Activated CD4-positive, alpha-beta T cell treated with anti-CD3 and anti-CD28 coated beads for 36 hours (primary cell): ENCODE measurements at regions of chr11 and their contacts with region 1.

Region 1: GRCh38 chr11:57530596-57531507 is at the start of gene TIMM10:
- DNase-seq: peak; percentile 97
- ATAC-seq: peak; percentile 95
- H3K4me3 Mint-ChIP-seq: peak within 1 kb of the TSS; percentile 81
- H3K27ac Mint-ChIP-seq: peak within 1 kb of the TSS; percentile 87
- H3K4me1 Mint-ChIP-seq: peaks cover 37% of the 10 kb centered on the region
- H3K27me3 Mint-ChIP-seq: no peaks in the 10 kb centered on the region
- total RNA-seq, gene TIMM10: 124 to 158 TPM

Region 2: GRCh38 chr11:57335343-57336110 is 195.3 kb before region 1 on chr11 and contains the start of gene SSRP1:
- CTCF ChIA-PET with region 1: interaction called, 6 read pairs
- POLR2A ChIA-PET with region 1: no interaction called
- intact Hi-C with region 1: loop called in 1 of 2 experiments (anchors 1 kb)
- DNase-seq: peak; percentile 93
- ATAC-seq: peak; percentile 99
- H3K4me3 Mint-ChIP-seq: peak within 1 kb of the TSS; percentile 97
- H3K27ac Mint-ChIP-seq: peak within 1 kb of the TSS; percentile 100
- H3K4me1 Mint-ChIP-seq: peaks cover 43% of the 10 kb centered on the region
- H3K27me3 Mint-ChIP-seq: no peaks in the 10 kb centered on the region
- total RNA-seq, gene SSRP1: 279 to 296 TPM

Region 3: GRCh38 chr11:57456960-57457642 is 73.8 kb before region 1 on chr11:
- CTCF ChIA-PET with region 1: interaction called, 74 read pairs
- POLR2A ChIA-PET with region 1: no interaction called
- intact Hi-C with region 1: loop called (anchors 1 kb)
- DNase-seq: peak; percentile 87
- ATAC-seq: peak; percentile 36
- H3K4me3 Mint-ChIP-seq: peak overlapping the region; percentile 15
- H3K27ac Mint-ChIP-seq: no peak overlapping the region
- H3K4me1 Mint-ChIP-seq: peaks cover 27% of the 10 kb centered on the region
- H3K27me3 Mint-ChIP-seq: peaks cover 25% of the 10 kb centered on the region

Region 4: DNA sequence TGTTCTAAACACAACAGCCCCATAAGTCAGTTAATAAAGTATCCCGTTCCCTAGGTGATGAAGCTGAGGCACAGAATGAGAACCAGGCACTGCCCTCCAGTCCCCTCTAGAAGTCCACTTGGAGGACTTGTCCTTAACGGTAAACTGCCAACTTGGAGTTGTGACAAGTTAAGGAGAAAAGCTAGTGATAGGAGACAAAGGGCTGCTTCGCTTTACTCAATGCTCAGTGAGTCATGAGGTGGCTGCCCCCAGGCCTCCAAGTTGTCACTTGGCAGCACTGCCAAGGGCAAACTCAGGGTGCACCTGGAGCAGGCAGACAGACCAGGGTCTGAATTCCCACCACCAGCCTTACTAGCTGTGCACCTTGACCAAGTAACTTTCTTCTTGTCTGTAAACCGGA is 28.9 kb before region 1 on chr11:
- CTCF ChIA-PET with region 1: interaction called, 262 read pairs
- POLR2A ChIA-PET with region 1: no interaction called
- intact Hi-C with region 1: no loop called
- DNase-seq: no peak
- ATAC-seq: no peak
- H3K4me3 Mint-ChIP-seq: no peak overlapping the region
- H3K27ac Mint-ChIP-seq: no peak overlapping the region
- H3K4me1 Mint-ChIP-seq: no peaks in the 10 kb centered on the region
- H3K27me3 Mint-ChIP-seq: no peaks in the 10 kb centered on the region

Region 5: DNA sequence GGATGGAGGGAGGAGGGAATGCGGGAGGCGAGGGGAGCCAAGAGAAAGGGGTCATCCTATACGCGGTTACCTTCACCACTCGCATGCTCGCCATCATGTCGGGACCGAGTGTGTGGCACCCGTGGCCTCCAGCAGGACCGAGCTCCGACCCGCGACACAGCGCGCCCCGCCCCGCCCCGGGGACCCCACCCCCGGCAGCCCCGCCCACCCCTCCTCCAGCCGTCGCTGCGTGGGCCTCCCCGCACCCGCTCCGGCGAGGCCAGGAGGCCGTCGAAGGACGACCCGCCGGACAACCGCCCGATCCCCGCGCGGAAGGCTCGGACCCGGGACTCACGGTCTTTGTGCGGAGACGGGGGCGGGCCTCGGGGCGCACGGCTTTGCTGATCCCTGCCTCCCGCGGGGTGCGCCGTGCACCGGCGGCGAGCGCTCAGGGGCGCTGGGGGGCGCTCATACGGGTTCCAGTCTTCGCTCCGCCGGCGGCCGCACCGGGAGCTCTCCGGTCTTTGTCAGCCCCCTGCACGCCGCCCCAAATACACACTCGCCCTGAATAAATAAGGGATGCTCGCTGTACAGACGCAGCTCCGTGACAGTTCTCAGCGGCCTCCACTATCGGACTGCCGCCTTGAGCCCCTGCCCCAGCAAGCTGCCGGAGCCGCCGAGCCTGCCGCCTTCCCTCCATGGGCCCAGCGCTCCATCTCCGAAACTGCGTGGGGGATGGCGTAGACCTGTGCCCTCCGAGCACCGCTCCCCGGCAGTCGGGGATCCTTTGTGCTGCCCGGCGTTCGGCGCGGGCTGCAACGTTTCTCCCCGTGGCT is 36.9 kb after region 1 on chr11 and contains the start of gene UBE2L6:
- CTCF ChIA-PET with region 1: interaction called, 6 read pairs
- POLR2A ChIA-PET with region 1: no interaction called
- intact Hi-C with region 1: loop called (anchors 1 kb)
- DNase-seq: peak; percentile 95
- ATAC-seq: peak; percentile 80
- H3K4me3 Mint-ChIP-seq: peak within 1 kb of the TSS; percentile 89
- H3K27ac Mint-ChIP-seq: peak within 1 kb of the TSS; percentile 98
- H3K4me1 Mint-ChIP-seq: peaks cover 29% of the 10 kb centered on the region
- H3K27me3 Mint-ChIP-seq: no peaks in the 10 kb centered on the region
- total RNA-seq, gene UBE2L6: 179 to 252 TPM

Region 6: DNA sequence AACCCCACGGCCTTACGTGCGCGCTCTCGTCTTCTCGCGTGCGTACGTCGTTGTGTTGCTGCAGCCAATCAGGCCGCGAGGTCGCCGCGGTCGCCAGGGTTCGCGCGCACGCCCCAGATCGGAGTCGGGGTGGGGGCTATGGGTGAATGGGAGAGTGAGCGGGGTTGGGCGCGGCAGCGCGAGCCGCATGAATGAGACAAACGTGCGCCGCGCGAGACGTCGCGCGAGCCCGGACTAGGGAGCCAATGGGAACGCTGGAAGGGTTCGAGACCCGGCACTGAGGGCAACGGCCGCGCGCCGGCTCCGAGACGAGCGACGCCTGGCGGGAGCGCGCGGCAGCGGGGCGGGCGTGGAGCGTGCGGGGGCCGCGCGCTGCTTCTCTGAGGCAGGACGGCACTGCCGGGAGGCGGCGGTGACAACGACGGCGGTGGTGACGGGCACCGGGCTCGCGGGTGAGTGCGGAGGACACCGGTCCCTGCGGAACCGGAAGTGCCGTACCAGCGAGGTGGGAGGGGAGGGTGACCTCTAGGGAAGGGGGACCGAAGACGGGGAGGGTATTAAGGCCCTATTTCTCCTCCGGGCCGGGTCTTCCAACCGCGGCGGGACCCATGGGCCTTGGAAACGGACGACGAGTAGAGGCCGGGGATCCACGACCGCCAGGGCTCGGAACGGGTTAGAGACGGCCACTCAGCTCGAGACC is 137.0 kb after region 1 on chr11 and contains the start of gene ZDHHC5:
- CTCF ChIA-PET with region 1: interaction called, 6 read pairs
- POLR2A ChIA-PET with region 1: no interaction called
- intact Hi-C with region 1: loop called in 1 of 2 experiments (anchors 1 kb)
- DNase-seq: peak; percentile 100
- ATAC-seq: peak; percentile 88
- H3K4me3 Mint-ChIP-seq: peak within 1 kb of the TSS; percentile 99
- H3K27ac Mint-ChIP-seq: peak within 1 kb of the TSS; percentile 99
- H3K4me1 Mint-ChIP-seq: peaks cover 37% of the 10 kb centered on the region
- H3K27me3 Mint-ChIP-seq: no peaks in the 10 kb centered on the region
- total RNA-seq, gene ZDHHC5: 46.2 to 60.0 TPM